ENCODE measurements at regions of chr16 and their contacts with region 1.

Region 1: DNA sequence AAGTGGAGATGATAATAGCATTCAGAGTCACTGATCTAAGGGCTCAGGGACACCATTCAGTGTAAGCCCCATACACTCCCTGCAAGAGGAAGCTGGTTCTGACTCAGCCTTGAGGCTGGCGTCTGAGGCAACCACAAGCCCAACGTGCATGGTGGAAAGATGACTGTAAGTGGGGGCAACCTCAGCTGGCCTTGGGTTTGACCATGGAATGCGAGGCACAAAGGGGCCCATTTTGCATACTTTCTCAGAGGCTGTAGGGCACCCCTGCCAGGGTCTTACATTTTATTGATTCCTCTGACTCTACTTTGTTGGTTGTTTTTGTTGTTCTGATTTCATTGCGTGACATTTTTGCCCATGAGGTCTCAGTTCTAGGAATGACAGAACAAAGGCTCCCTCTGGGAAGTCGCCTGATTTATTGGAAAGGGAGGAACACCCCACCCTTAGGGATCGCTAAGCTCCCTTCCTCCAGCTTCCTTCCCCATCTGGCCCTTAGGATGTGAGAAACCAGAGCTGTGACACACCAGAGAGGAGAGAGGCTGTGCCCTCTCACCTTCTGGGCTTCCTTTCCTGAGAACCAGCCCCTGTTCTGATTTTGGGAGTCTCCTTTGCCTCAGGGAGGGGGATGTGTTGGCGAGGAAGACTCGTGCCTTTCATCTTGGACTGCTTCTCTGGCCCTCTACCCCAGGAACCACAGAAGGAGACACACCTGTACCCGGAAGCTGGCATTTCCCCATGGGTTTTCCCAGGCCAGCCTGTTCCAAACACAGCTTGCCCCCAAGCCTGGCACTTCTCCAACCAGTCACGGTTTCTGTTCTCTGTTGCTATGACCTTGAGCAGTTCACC is 5.6 kb upstream of the CIITA start:
- DNase-seq: peak; percentile 86
- ATAC-seq: peak; percentile 78
- H3K4me3 ChIP-seq: no peak overlapping the region
- H3K27ac ChIP-seq: peak overlapping the region; percentile 65
- H3K4me1 ChIP-seq: peaks cover 84% of the 10 kb centered on the region
- H3K27me3 ChIP-seq: no peaks in the 10 kb centered on the region
- CTCF ChIP-seq: no peak
- EP300 ChIP-seq: peak; percentile 88 to 90
- POLR2A ChIP-seq: 0 out of 2 replicates have a peak, but pooled peaks have one; percentile 27
- RAD21 ChIP-seq: peak; percentile 16; the same call in 1 of the 2 replicates

Region 2: DNA sequence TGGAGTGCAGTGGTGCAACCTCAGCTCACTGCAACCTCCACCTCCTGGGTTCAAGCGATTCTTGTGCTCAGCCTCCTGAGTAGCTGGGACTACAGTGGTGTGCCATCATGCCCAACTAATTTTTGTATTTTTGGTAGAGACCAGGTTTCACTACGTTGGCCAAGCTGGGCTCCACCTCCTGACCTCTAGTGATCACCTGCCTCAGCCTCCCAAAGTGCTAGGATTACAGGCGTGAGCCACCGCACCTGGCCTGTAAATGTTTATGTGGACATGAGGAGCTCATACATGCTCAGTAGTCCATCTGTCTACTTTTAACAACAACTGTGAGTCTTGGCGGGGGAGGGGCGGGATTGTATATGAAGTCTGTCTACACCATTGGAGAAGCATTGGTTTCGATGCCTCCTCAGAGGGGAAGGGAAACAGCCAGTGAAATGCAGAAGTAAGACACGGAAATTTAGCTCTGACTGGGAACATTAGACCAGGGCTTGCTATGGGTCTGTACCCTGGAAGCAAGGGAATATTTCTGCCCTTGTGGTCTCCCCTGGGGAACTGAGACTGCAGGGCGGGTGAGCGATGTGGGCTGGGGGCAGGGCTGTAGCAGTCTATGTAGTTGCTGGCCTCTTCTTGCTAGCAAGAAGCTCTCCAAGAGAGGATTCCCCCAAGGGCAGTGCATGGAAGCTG is 118.4 kb before region 1 on chr16:
- CTCF ChIA-PET with region 1: interaction called, 3 read pairs
- POLR2A ChIA-PET with region 1: interaction called, 5 read pairs
- RAD21 ChIA-PET with region 1: interaction called, 21 read pairs
- SMC1A ChIA-PET with region 1: interaction called, 13 read pairs
- in situ Hi-C with region 1: no loop called
- intact Hi-C with region 1: no loop called
- DNase-seq: peak; percentile 74
- ATAC-seq: peak; percentile 90
- H3K4me3 ChIP-seq: 0 out of 2 replicates have a peak overlapping the region, but pooled peaks have one; percentile 2
- H3K27ac ChIP-seq: peak overlapping the region; percentile 49
- H3K4me1 ChIP-seq: peaks cover 31% of the 10 kb centered on the region
- H3K27me3 ChIP-seq: no peaks in the 10 kb centered on the region
- CTCF ChIP-seq: no peak
- EP300 ChIP-seq: peak in 1 of 2 experiments; percentile 72; a peak in 2 of 4 replicates
- POLR2A ChIP-seq: no peak
- RAD21 ChIP-seq: no peak

Region 3: GRCh38 chr16:10835281-10835931 is 36.0 kb before region 1 on chr16:
- CTCF ChIA-PET with region 1: interaction called, 6 read pairs
- POLR2A ChIA-PET with region 1: interaction called, 25 read pairs
- RAD21 ChIA-PET with region 1: interaction called, 33 read pairs
- SMC1A ChIA-PET with region 1: interaction called, 75 read pairs
- in situ Hi-C with region 1: no loop called
- intact Hi-C with region 1: loop called (anchors 1 kb)
- DNase-seq: peak; percentile 84
- ATAC-seq: peak; percentile 76
- H3K4me3 ChIP-seq: no peak overlapping the region
- H3K27ac ChIP-seq: peak overlapping the region; percentile 33
- H3K4me1 ChIP-seq: peaks cover 49% of the 10 kb centered on the region
- H3K27me3 ChIP-seq: no peaks in the 10 kb centered on the region
- CTCF ChIP-seq: no peak
- EP300 ChIP-seq: peak; percentile 86 to 89
- POLR2A ChIP-seq: no peak
- RAD21 ChIP-seq: no peak; the same call in 1 of the 2 replicates

Region 4: DNA sequence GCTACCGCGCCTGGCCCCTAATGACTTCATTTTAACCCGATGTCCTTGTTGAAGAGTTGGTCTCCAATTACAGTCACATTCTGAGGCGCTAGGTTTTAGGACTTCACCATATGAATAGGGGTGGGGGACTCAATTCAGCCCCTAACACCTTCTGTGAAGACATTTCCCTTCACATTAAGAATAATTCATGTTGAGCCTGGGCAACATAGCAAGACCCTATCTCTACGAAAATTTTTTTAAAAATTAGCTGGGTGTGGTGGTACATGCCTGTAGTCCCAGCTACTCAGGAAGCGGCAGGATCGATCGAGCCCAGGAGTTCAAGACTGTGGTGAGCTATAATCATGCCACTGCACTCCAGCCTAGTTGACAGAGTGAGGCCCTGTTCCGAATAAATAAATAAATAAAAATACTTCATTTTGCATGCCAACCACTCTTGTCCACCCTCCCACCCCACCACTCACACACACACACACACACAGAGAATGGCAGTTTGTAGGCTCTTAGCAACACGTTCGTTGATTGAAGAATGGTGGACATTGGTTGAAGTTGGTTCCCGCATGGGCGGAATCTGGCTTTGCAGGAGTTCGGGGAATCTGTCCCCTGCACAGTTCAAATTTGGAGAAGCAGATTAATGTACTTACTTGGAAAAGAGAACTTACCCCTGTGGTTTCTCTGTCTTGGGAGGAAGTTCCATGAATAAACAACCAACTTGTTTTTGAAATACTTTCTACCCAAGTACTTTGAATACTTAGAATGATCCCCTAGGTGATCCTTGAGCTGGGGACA is 25.0 kb before region 1 on chr16:
- CTCF ChIA-PET with region 1: interaction called, 3 read pairs
- POLR2A ChIA-PET with region 1: interaction called, 6 read pairs
- RAD21 ChIA-PET with region 1: interaction called, 19 read pairs
- SMC1A ChIA-PET with region 1: interaction called, 13 read pairs
- in situ Hi-C with region 1: no loop called
- intact Hi-C with region 1: loop called (anchors 2 kb)
- DNase-seq: no peak
- ATAC-seq: no peak
- H3K4me3 ChIP-seq: no peak overlapping the region
- H3K27ac ChIP-seq: no peak overlapping the region
- H3K4me1 ChIP-seq: peaks cover 20% of the 10 kb centered on the region
- H3K27me3 ChIP-seq: no peaks in the 10 kb centered on the region
- CTCF ChIP-seq: no peak
- EP300 ChIP-seq: no peak
- POLR2A ChIP-seq: no peak
- RAD21 ChIP-seq: no peak

Region 5: GRCh38 chr16:10883004-10883403 is 11.6 kb after region 1 on chr16:
- CTCF ChIA-PET with region 1: interaction called, 73 read pairs
- POLR2A ChIA-PET with region 1: interaction called, 133 read pairs
- RAD21 ChIA-PET with region 1: interaction called, 142 read pairs
- SMC1A ChIA-PET with region 1: interaction called, 133 read pairs
- in situ Hi-C with region 1: no loop called
- intact Hi-C with region 1: no loop called
- DNase-seq: no peak
- ATAC-seq: no peak
- H3K4me3 ChIP-seq: peak overlapping the region; percentile 14; the same call in 1 of the 2 replicates
- H3K27ac ChIP-seq: peak overlapping the region; percentile 8; the same call in 1 of the 2 replicates
- H3K4me1 ChIP-seq: peaks cover 64% of the 10 kb centered on the region
- H3K27me3 ChIP-seq: no peaks in the 10 kb centered on the region
- CTCF ChIP-seq: no peak
- EP300 ChIP-seq: no peak
- POLR2A ChIP-seq: no peak
- RAD21 ChIP-seq: no peak

Region 6: DNA sequence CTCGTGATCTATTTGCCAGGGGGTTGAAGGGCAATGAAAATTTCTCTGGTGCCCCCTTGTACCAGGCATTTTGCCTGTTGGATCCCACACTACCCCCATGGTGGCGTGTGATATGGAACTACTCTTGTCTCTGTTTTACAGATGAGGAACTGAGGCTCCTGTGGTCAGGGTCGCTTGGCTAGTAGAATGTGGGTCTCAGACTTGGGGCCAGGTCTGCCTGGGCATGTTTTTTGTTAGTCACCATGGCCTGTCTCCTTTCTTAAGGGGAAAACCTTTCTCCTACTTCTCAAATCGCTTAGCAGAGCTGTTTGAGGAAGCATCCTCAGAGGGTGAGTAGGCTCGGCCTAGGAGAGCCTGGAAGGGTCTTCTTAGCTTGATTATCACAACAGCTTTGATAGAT is 124.2 kb after region 1 on chr16:
- CTCF ChIA-PET with region 1: no interaction called
- POLR2A ChIA-PET with region 1: no interaction called
- RAD21 ChIA-PET with region 1: no interaction called
- SMC1A ChIA-PET with region 1: no interaction called
- in situ Hi-C with region 1: no loop called
- intact Hi-C with region 1: no loop called
- DNase-seq: no peak
- ATAC-seq: peak; percentile 58
- H3K4me3 ChIP-seq: no peak overlapping the region
- H3K27ac ChIP-seq: peak overlapping the region; percentile 69
- H3K4me1 ChIP-seq: peaks cover 19% of the 10 kb centered on the region
- H3K27me3 ChIP-seq: no peaks in the 10 kb centered on the region
- CTCF ChIP-seq: no peak
- EP300 ChIP-seq: no peak
- POLR2A ChIP-seq: no peak
- RAD21 ChIP-seq: no peak

Region 7: DNA sequence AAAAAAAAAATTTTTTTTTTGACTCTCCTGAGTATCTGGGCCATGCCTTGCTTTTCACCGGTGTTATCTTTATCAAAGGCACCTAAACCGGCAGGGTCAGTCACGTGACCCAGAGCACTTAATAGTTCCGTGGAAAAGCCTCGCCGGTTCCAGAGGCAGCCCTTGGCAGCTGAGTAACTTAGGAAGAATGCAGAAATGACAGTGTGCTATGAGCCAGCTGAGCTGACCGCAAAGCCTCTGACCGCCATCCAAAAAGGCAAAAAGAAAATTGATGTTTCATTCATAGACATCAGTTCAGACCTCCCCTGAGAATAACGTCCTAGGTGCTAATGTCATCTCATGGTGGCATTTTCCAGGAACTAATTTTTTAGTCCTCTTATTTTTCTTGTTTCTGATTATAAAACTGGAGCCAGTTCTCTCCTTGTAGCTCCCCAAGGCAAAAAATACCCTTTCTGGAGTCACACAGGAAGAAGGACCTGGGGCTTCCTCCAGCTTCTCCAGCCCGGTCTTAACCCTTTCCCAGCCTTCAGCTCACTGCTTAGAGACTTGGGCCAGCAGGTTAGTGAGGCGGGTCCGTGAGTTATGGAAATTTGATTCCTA is 262.1 kb after region 1 on chr16:
- CTCF ChIA-PET with region 1: no interaction called
- POLR2A ChIA-PET with region 1: no interaction called
- RAD21 ChIA-PET with region 1: no interaction called
- SMC1A ChIA-PET with region 1: no interaction called
- in situ Hi-C with region 1: no loop called
- intact Hi-C with region 1: no loop called
- DNase-seq: no peak
- ATAC-seq: no peak
- H3K4me3 ChIP-seq: no peak overlapping the region
- H3K27ac ChIP-seq: no peak overlapping the region
- H3K4me1 ChIP-seq: peaks cover 13% of the 10 kb centered on the region
- H3K27me3 ChIP-seq: no peaks in the 10 kb centered on the region
- CTCF ChIP-seq: no peak
- EP300 ChIP-seq: no peak
- POLR2A ChIP-seq: no peak
- RAD21 ChIP-seq: no peak

Measured in GM12878 (cell line).